Heart right ventricle (tissue), 16 donors: ENCODE measurements at regions of chr3 and their contacts with region 1.

Region 1: DNA sequence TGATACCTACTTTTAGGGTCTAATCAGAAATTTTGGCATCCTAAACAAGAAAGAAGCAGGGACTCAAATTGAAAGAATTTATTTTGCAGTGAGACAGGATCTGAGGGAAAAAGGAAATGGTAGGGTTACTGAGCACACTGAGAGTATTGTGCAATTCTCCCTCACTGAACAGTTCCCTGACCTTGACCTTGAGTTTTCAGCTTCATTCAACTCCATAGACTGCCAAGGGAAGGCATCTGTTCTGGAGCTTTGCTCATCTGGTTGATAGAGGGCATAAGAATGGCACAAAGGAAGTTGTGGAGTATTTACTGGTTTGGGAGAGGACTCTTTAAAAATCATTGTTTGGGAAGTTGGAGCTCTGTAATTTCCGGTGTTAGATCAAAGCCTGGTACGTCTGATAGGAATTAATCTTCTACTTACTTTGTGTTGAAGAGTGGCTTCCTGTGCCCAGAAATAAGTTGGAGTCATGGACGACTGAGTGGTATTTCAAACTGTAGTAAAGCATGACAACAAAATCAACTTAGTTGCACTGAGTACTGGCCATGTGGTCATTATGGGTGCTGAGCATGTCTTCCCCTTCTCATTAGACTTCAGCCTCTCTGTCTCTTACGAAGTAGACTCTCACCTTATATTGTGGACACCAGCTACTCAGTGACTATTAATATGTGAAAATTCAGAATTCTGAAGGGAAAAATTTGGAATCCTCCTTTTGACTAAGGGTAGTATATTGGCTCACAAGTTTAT is 40.8 kb downstream of the CLDN1 start:
- DNase-seq: no peak
- ATAC-seq: peak in 4 of 8 donors; percentile 61 to 83 (median 82)
- H3K4me3 ChIP-seq: no peak overlapping the region
- H3K27ac ChIP-seq: no peak overlapping the region
- H3K4me1 ChIP-seq: peaks cover 0 to 9% (median 0%) of the 10 kb centered on the region in 9 donors
- H3K27me3 ChIP-seq: no peaks in the 10 kb centered on the region
- CTCF ChIP-seq: no peak

Region 2: DNA sequence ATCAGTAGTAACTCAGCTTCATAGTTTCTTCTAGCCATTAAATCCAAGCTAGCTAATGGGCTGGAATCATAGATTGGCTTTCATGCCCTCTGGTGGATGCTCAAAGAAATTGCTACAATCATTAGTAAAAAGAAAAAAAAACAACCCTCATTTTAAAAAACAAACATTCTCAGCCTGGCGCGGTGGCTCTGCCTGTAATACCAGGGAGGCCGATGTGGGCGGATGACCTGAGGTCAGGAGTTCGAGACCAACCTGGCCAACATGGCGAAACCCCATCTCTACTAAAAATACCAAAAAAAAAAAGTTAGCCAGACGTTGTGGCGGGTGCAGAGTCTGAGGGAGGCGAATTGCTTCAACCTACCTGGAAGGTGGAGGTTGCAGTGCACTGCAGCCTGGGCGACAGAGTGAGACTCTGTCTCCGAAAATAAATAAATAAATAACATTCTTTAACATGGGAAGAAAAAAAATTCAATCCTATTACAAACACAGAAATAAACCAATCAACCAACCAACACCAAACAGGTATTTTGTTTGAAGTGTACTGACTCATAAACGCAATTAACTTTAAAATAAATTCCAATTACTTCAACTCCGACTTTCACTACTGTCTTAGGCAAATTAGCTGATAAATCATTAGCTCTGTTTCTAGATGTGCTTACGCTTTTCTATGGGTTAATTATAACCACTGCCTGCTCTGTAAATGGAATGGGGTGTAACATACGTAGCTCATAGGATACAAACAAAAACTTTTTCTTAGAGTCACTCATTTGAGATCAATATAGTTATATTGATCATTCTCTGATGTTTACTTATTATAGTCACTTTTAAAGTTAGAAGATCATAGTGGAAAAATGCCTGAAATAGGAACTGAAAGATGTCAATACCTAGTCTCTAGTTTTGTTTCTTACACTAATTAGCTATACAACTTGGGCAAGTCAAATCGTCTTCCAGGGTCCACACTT is 143.3 kb after region 1 on chr3:
- intact Hi-C with region 1: no loop called
- DNase-seq: peak; percentile 18 to 29
- ATAC-seq: peak in 6 of 8 donors; percentile 22 to 60 (median 41)
- H3K4me3 ChIP-seq: no peak overlapping the region
- H3K27ac ChIP-seq: no peak overlapping the region
- H3K4me1 ChIP-seq: peaks cover 0 to 7% (median 0%) of the 10 kb centered on the region in 9 donors
- H3K27me3 ChIP-seq: no peaks in the 10 kb centered on the region
- CTCF ChIP-seq: peak; percentile 26 to 74 (median 67)

Region 3: DNA sequence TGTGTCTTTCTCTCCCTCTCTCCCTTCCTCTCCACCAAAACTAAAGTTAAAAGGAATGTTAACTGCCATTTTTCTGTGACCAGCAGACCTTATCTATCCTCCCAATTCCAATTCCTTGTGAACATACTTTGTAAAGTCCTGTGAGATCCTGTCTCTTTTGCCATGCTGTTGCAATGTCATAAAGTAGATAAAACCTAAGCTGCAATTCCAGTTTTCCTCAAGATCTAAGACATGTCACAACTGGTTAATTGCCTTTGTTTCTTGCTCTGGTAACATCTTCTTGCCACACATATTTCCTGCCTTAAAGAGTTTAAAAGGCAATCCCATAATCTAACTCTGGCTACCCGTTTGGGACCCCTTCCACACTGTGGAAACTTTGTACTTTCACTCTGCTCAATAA is 1368.1 kb after region 1 on chr3:
- intact Hi-C with region 1: loop called in 1 of 10 experiments (anchors 5 kb)
- DNase-seq: no peak
- ATAC-seq: no peak
- H3K4me3 ChIP-seq: no peak overlapping the region
- H3K27ac ChIP-seq: no peak overlapping the region
- H3K4me1 ChIP-seq: no peaks in the 10 kb centered on the region
- H3K27me3 ChIP-seq: no peaks in the 10 kb centered on the region
- CTCF ChIP-seq: no peak